ENCODE measurements at regions of chr6 and their contacts with region 1.

Region 1: GRCh38 chr6:168370310-168370991 is 50.9 kb upstream of the DACT2 start:
- DNase-seq: peak; percentile 32
- ATAC-seq: peak; percentile 98
- H3K4me3 ChIP-seq: no peak overlapping the region
- H3K27ac ChIP-seq: no peak overlapping the region
- H3K4me1 ChIP-seq: peaks cover 0 to 4% of the 10 kb centered on the region in 2 experiments; a peak in 1 of 4 replicates
- H3K27me3 ChIP-seq: no peaks in the 10 kb centered on the region
- CTCF ChIP-seq: peak; percentile 84 to 87 (median 85)
- POLR2A ChIP-seq: no peak
- RAD21 ChIP-seq: peak; percentile 96

Region 2: GRCh38 chr6:168658059-168658458 is 287.6 kb after region 1 on chr6:
- CTCF ChIA-PET with region 1: no interaction called
- POLR2A ChIA-PET with region 1: no interaction called
- RAD21 ChIA-PET with region 1: no interaction called
- intact Hi-C with region 1: loop called (anchors 2 kb)
- DNase-seq: no peak
- ATAC-seq: no peak
- H3K4me3 ChIP-seq: no peak overlapping the region
- H3K27ac ChIP-seq: no peak overlapping the region
- H3K4me1 ChIP-seq: peaks cover 0 to 6% of the 10 kb centered on the region in 2 experiments; a peak in 1 of 4 replicates
- H3K27me3 ChIP-seq: no peaks in the 10 kb centered on the region
- CTCF ChIP-seq: peak in 2 of 3 experiments; percentile 5 to 24; a peak in 2 of 6 replicates
- POLR2A ChIP-seq: no peak
- RAD21 ChIP-seq: peak; percentile 47

Region 3: DNA sequence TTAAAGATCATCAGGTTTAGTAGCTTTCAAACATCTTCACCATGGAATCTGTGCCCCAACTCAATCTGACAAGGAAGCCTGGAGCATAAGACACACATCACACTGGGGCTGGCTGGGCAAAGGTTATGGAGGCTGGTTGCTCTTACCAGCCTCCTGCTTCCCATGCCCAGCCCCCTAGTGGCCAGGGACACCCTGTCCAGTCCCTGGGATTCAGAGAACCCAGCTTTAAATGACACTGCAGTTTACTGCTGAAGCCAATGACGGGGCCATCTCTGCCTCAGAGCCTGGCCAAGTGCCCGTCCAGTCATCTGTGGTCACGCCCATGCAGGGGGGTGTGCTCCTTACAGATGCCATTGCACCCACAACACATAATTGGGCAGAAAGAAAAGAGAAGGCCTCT is 343.4 kb after region 1 on chr6:
- CTCF ChIA-PET with region 1: interaction called, 4 read pairs
- POLR2A ChIA-PET with region 1: no interaction called
- RAD21 ChIA-PET with region 1: no interaction called
- intact Hi-C with region 1: loop called (anchors 1 kb)
- DNase-seq: peak; percentile 49
- ATAC-seq: peak; percentile 93
- H3K4me3 ChIP-seq: no peak overlapping the region
- H3K27ac ChIP-seq: no peak overlapping the region
- H3K4me1 ChIP-seq: peaks cover 0 to 6% of the 10 kb centered on the region in 2 experiments; a peak in 1 of 4 replicates
- H3K27me3 ChIP-seq: no peaks in the 10 kb centered on the region
- CTCF ChIP-seq: peak; percentile 31 to 67 (median 66); a peak in 4 of 6 replicates
- POLR2A ChIP-seq: no peak
- RAD21 ChIP-seq: peak; percentile 60

Region 4: GRCh38 chr6:168791917-168792316 is 421.5 kb after region 1 on chr6:
- CTCF ChIA-PET with region 1: no interaction called
- POLR2A ChIA-PET with region 1: no interaction called
- RAD21 ChIA-PET with region 1: no interaction called
- intact Hi-C with region 1: no loop called
- DNase-seq: no peak
- ATAC-seq: no peak
- H3K4me3 ChIP-seq: no peak overlapping the region
- H3K27ac ChIP-seq: no peak overlapping the region
- H3K4me1 ChIP-seq: no peaks in the 10 kb centered on the region
- H3K27me3 ChIP-seq: no peaks in the 10 kb centered on the region
- CTCF ChIP-seq: no peak
- POLR2A ChIP-seq: no peak
- RAD21 ChIP-seq: no peak

Region 5: DNA sequence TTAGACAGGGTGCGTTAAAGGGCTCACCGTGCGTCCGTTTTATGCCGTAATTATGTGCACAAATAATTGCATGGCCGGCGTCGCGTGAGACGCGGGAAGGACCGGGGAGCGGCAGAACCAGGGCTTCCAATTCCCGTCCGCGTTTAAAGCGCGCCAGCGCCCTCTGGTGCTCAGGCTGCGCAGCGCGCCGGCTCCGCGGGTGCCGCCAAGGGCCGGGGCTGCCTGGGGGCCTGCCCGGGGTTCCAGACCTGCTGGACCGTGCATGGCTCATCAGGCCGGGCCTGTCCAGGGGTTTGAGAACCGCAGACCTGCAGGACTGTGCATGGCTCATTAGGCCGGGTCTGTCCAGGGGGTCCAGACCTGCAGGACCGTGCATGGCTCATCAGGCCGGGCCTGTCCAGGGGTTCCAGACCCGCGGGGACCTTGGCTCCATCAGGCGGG is 514.2 kb after region 1 on chr6:
- CTCF ChIA-PET with region 1: interaction called, 9 read pairs
- POLR2A ChIA-PET with region 1: no interaction called
- RAD21 ChIA-PET with region 1: no interaction called
- intact Hi-C with region 1: loop called (anchors 1 kb)
- DNase-seq: peak; percentile 31
- ATAC-seq: peak; percentile 97
- H3K4me3 ChIP-seq: no peak overlapping the region
- H3K27ac ChIP-seq: no peak overlapping the region
- H3K4me1 ChIP-seq: 0 out of 4 replicates have a peak, but pooled peaks cover 0 to 3% of the 10 kb centered on the region in 2 experiments
- H3K27me3 ChIP-seq: peaks cover 8% of the 10 kb centered on the region; the same call in 1 of the 2 replicates
- CTCF ChIP-seq: peak; percentile 88 to 91 (median 90)
- POLR2A ChIP-seq: no peak
- RAD21 ChIP-seq: peak; percentile 97

Region 6: DNA sequence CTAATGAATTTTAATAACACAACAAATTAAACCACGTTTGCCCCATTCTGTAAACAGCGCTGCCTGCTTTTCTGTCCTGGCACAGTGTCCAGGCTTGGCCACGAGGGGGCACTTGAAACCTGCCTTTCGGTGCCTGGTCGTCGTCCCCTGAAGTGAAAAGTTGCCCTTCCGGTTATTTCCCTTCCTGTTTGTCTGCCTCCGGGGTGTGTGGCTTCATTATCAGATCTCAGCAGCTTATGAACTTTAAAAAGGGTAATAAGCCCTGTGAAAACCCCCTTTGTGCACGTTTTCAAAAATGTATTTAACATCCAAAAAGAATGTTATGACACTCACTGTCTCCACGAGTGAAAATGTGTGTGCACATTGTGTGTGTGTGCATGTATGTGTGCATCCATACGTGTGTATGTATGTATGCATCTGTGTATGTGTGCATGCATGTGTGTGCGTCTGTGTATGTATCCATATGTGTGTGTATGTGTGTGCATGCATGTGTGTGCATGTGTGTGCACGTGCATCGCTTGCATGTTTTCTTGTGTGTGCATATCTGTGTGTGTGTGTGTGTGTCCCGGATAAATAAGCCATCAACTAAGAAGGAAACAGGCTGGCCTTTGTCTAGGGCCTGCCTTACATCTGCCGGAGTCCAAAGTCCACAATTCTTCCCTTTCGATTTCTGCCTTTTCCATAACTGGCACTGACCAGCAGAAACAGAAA is 524.8 kb after region 1 on chr6:
- CTCF ChIA-PET with region 1: interaction called, 12 read pairs
- POLR2A ChIA-PET with region 1: no interaction called
- RAD21 ChIA-PET with region 1: no interaction called
- intact Hi-C with region 1: no loop called
- DNase-seq: peak; percentile 43
- ATAC-seq: peak; percentile 96
- H3K4me3 ChIP-seq: 0 out of 4 replicates have a peak overlapping the region, but pooled peaks have one; percentile 7 to 29
- H3K27ac ChIP-seq: no peak overlapping the region
- H3K4me1 ChIP-seq: peaks cover 0 to 12% of the 10 kb centered on the region in 2 experiments; a peak in 2 of 4 replicates
- H3K27me3 ChIP-seq: no peaks in the 10 kb centered on the region
- CTCF ChIP-seq: peak; percentile 89 to 93 (median 92)
- POLR2A ChIP-seq: no peak
- RAD21 ChIP-seq: peak; percentile 94

Measured in HCT116 (cell line).